ENCODE measurements at regions of chr17 and their contacts with region 1.

Region 1: GRCh38 chr17:21275579-21276263 is 8.8 kb upstream of the MAP2K3 start:
- DNase-seq: peak; percentile 81 to 90
- H3K4me3 ChIP-seq: peak overlapping the region; percentile 57 to 81 (median 78)
- H3K27ac ChIP-seq: peak overlapping the region; percentile 13 to 41
- H3K4me1 ChIP-seq: peaks cover 5 to 9% of the 10 kb centered on the region in 2 donors
- H3K27me3 ChIP-seq: no peaks in the 10 kb centered on the region
- CTCF ChIP-seq: no peak
- POLR2A ChIP-seq: no peak

Region 2: GRCh38 chr17:19520641-19521040 is 1755.1 kb before region 1 on chr17:
- intact Hi-C with region 1: no loop called
- DNase-seq: no peak
- H3K4me3 ChIP-seq: no peak overlapping the region
- H3K27ac ChIP-seq: no peak overlapping the region
- H3K4me1 ChIP-seq: no peaks in the 10 kb centered on the region
- H3K27me3 ChIP-seq: no peaks in the 10 kb centered on the region
- CTCF ChIP-seq: no peak
- POLR2A ChIP-seq: no peak

Region 3: GRCh38 chr17:21194703-21195102 is 81.0 kb before region 1 on chr17:
- intact Hi-C with region 1: no loop called
- DNase-seq: no peak
- H3K4me3 ChIP-seq: peak overlapping the region in 2 of 3 donors; percentile 0 to 3
- H3K27ac ChIP-seq: peak overlapping the region; percentile 40 to 50
- H3K4me1 ChIP-seq: no peaks in the 10 kb centered on the region
- H3K27me3 ChIP-seq: no peaks in the 10 kb centered on the region
- CTCF ChIP-seq: no peak
- POLR2A ChIP-seq: no peak

Region 4: DNA sequence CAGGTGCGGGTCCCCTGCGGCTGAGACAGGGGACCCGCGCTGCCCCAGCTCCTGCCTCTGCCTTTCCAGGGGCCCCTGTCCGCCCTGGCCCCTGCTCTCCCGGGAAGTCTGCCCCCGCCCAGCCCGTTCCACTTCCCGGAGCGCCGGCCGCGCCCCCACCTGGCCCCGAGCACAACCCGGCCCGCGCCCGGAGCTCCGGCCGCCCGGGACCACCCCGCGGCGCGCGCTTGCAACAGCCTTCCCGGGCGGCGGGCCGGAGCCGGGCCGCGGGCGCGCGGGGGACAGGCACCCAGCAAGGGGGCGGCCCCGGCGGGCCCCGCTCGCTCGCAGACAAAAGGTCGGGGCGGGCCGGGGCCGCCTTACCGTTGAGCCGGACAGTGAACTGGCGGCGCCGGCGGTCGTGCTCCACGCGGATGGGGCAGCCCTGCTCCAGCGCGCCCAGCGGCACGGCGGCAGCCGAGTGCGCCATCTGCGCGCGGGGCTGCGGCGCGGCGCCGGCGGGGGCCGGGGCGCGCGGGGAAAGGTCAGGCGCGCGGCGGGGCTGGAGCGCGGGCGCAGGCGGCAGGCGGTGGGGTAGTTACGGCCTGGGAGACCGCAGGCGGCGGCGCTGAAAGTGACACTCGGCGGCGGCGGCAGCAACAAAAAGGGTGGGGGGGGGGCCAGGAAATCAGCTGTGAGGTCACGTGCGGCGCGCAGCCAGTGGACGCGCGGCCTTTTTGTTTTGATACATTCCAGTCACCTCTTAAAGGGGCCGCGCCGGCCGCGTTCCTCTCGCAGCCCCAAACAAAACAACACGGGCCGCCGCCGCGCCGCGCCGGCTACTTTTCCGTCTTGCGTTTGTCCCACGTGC is 22.7 kb before region 1 on chr17 and contains the start of gene NATD1:
- intact Hi-C with region 1: loop called (anchors 2 kb)
- DNase-seq: peak; percentile 81 to 83
- H3K4me3 ChIP-seq: peak within 1 kb of the TSS; percentile 74 to 93 (median 76)
- H3K27ac ChIP-seq: peak within 1 kb of the TSS; percentile 77 to 88
- H3K4me1 ChIP-seq: peaks cover 5 to 10% of the 10 kb centered on the region in 2 donors
- H3K27me3 ChIP-seq: no peaks in the 10 kb centered on the region
- CTCF ChIP-seq: no peak
- POLR2A ChIP-seq: no peak
- total RNA-seq, gene NATD1: 8.2 to 11.8 (median 8.6) TPM